ENCODE measurements at regions of chr7 and their contacts with region 1.

Region 1: DNA sequence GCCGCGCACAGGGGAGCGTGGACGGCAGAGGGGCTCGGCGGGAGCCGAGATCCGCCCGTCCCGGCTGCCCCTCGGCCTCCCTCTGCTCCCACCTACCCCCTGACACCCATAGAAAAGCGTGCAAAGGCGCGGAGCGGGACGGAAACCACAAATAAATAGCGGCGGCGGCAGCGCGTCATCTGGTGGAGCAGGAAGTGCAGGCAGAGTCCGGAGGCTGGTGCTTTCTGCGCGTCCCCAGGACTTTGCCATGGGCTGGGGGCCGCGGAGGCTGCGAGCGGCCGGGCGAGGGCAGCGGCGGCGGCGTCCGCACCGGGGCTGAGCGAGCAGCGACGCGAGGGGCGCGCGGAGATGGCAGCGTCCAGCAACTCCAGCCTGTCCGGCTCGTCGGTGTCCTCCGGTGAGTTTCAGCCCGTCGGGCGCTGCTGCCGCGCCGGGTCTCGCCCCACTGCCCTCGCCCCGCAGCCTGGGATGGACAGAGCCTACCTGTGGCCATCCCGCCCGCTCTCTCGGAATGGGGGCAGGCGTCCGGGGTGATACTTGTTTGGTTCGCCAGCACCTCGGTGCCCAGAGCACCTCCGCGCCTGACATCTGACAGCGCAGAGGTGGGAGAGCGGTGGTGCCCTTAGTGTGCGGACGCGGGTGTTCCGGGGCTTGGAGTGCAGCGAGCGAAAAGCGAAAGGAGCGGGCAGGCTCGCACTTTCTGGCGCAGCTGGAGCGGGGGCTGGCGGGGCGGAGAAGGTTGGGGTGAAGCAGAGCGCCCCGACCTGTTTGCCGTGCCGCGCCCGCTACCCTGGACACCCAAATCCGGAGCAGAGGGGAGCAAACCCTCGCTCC is at the start of gene CHN2:
- DNase-seq: peak; percentile 63
- H3K4me3 Mint-ChIP-seq: peak within 1 kb of the TSS; percentile 64
- H3K27ac Mint-ChIP-seq: no peak within 1 kb of the TSS
- H3K4me1 Mint-ChIP-seq: peaks cover 14% of the 10 kb centered on the region
- H3K27me3 Mint-ChIP-seq: peaks cover 59% of the 10 kb centered on the region
- total RNA-seq, gene CHN2: not detected

Region 2: DNA sequence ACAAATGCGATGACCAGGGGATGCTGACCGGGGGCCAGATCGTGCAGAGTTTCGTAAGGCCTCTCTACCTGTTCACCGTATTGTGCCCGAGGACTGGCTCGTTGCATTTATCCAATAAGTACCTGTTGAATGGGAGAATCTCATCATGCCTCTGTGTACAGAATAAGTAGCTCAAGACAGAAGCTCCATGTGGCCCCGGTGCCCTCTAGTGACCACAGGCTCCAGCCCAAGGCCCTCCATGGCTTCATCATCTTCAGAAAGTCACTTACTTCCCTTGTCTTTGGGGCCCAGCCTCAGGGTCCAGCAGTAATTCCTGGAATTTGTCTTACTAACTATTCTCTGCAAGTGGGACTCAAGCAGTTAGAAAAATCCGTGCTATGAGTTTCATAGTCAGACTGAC is 150.8 kb after region 1 on chr7:
- CTCF ChIA-PET with region 1: interaction called, 5 read pairs
- intact Hi-C with region 1: loop called (anchors 5 kb)
- DNase-seq: peak; percentile 22
- H3K4me3 Mint-ChIP-seq: no peak overlapping the region
- H3K27ac Mint-ChIP-seq: no peak overlapping the region
- H3K4me1 Mint-ChIP-seq: no peaks in the 10 kb centered on the region
- H3K27me3 Mint-ChIP-seq: peaks cover 3% of the 10 kb centered on the region